Cardiac septum (tissue), 1 donor: ENCODE measurements at regions of chr6 and their contacts with region 1.

Region 1: GRCh38 chr6:12911387-12911960 is 194.9 kb downstream of the PHACTR1 start:
- DNase-seq: no peak

Region 2: DNA sequence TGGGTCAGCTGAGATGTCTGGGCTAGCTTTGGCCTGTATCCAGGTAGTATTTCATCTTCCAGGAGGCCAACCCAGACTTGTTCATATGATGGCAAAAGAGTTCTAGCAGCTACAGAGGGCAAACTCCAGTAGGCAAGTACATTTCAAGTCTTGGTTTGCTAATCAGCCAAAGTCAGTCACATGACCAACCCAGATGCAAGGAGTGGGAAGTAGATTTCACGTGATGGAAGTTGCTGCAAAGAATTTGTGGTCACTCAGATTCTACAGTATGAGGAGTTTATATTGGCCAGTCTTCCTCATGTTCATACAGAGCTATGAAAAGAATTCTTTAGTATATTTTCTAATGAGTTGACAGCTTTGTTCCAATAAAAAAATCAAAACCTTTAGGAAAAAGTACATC is 93.2 kb before region 1 on chr6:
- intact Hi-C with region 1: no loop called
- DNase-seq: no peak

Region 3: DNA sequence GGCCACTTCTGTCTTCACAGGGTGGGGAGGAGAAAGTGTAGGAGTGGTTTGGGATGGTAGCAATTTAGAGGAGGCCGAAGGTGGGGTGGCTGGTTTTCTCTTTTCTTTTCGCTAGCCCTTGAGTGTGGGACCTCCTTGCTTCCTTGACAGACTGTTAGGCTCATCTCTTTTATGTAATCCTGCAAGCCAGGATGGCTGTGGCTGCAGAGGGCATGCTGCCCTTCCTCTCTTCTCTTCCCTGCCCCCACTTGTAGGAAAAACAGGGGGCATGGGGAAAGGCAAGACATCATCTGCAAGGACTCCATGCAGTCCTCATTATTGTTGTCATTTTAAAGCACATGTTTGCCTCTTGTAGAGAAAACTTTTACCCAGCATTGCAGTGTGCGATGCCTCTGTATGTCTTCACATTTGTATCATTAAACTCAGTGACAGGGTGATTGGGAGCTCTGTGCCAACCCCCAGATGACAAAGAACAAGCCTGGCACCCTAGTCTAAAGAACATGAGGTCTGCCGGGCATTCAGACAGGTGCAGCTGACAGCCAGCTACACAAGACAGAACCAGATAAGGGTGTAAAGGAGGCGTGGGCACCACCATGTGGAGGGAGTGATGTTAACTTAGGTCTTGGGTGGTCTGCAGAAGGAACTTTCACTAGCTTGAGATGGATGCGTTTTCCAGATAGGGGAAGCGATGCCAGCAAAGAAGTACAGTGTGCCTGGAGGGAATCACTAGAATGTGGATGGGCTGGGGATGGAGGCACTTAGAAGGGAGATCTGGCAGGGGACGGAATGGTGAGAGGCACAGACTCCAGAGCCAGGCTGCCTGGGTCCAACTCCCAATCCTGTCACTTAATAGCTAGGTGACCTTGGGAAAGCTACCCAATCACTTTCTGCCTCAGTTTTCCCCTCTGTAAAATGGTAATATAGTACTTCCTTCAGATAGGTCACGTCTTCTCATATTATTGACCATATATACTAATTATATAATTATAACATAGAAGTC is 209.3 kb after region 1 on chr6:
- intact Hi-C with region 1: loop called (anchors 5 kb)
- DNase-seq: no peak